CD4-positive, alpha-beta T cell (primary cell): ENCODE measurements at regions of chr1 and their contacts with region 1.

Region 1: DNA sequence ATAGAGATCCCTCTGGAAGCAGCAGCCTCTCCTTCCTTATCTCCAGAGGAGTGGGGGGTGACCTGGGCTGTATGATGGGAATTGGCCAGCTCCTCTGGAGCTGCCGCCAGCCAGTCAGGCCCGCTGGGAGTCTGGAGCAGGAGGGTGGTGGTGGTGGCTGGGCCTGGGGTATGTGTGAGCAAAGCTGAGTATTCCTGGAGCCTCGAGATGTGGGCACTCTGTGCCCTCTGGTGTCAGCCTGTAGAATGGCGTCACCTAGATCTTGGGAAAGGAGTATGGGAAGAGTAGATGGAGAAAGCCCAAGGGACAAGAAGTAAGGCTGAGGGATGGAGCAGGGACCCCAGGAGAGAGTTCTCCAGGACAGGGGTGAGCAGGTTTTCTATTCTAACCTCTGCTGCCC is 16.0 kb downstream of the VANGL2 start:
- DNase-seq: no peak
- ATAC-seq: no peak
- H3K4me3 ChIP-seq: no peak overlapping the region
- H3K4me3 Mint-ChIP-seq: no peak overlapping the region
- H3K27ac ChIP-seq: no peak overlapping the region
- H3K27ac Mint-ChIP-seq: no peak overlapping the region
- H3K4me1 ChIP-seq: no peaks in the 10 kb centered on the region
- H3K4me1 Mint-ChIP-seq: no peaks in the 10 kb centered on the region
- H3K27me3 ChIP-seq: peaks cover 0 to 3% of the 10 kb centered on the region in 2 experiments
- H3K27me3 Mint-ChIP-seq: no peaks in the 10 kb centered on the region
- CTCF ChIP-seq: no peak

Region 2: DNA sequence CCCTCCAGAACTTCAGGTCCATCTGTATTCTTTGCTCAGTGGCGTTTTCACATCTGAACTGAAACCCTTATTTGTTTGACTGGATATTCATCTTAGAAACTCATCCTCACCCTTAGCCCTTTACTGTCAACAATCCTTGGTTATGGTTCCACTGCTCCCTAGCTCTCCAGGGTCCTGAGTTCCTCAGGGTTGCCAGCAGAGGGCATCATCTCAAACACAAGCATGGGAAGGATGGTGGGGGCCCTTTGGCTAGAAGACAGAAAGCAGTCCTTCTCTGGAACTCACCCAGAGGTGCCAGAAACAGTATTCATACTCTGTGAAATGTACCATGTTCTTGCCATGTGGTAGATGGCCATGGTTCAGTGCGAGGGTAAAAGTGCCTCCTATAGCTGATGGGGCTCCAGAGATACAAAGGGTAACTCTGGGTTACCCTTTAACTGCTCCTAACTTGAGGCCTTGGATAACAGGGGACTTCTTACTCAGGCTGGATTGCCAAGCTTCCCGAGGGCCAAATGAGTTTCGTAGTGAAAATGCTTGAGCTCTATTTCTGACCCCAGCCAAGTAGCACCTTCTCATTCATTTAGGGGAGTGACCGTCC is 61.9 kb before region 1 on chr1:
- CTCF ChIA-PET with region 1: no interaction called
- POLR2A ChIA-PET with region 1: no interaction called
- intact Hi-C with region 1: no loop called
- DNase-seq: peak in 3 of 14 experiments; percentile 21 to 48 (median 42)
- ATAC-seq: peak; percentile 58
- H3K4me3 ChIP-seq: no peak overlapping the region
- H3K4me3 Mint-ChIP-seq: no peak overlapping the region
- H3K27ac ChIP-seq: no peak overlapping the region
- H3K27ac Mint-ChIP-seq: no peak overlapping the region
- H3K4me1 ChIP-seq: no peaks in the 10 kb centered on the region
- H3K4me1 Mint-ChIP-seq: peaks cover 3% of the 10 kb centered on the region
- H3K27me3 ChIP-seq: no peaks in the 10 kb centered on the region
- H3K27me3 Mint-ChIP-seq: no peaks in the 10 kb centered on the region
- CTCF ChIP-seq: peak; percentile 27

Region 3: GRCh38 chr1:160437432-160438316 is 21.3 kb after region 1 on chr1:
- CTCF ChIA-PET with region 1: no interaction called
- POLR2A ChIA-PET with region 1: no interaction called
- intact Hi-C with region 1: no loop called
- DNase-seq: peak in 4 of 14 experiments; percentile 29 to 77 (median 74)
- ATAC-seq: peak; percentile 84
- H3K4me3 ChIP-seq: peak overlapping the region; percentile 49
- H3K4me3 Mint-ChIP-seq: peak overlapping the region; percentile 89
- H3K27ac ChIP-seq: peak overlapping the region; percentile 69 to 81
- H3K27ac Mint-ChIP-seq: peak overlapping the region; percentile 94
- H3K4me1 ChIP-seq: peaks cover 19% of the 10 kb centered on the region
- H3K4me1 Mint-ChIP-seq: peaks cover 53% of the 10 kb centered on the region
- H3K27me3 ChIP-seq: no peaks in the 10 kb centered on the region
- H3K27me3 Mint-ChIP-seq: no peaks in the 10 kb centered on the region
- CTCF ChIP-seq: no peak

Region 4: DNA sequence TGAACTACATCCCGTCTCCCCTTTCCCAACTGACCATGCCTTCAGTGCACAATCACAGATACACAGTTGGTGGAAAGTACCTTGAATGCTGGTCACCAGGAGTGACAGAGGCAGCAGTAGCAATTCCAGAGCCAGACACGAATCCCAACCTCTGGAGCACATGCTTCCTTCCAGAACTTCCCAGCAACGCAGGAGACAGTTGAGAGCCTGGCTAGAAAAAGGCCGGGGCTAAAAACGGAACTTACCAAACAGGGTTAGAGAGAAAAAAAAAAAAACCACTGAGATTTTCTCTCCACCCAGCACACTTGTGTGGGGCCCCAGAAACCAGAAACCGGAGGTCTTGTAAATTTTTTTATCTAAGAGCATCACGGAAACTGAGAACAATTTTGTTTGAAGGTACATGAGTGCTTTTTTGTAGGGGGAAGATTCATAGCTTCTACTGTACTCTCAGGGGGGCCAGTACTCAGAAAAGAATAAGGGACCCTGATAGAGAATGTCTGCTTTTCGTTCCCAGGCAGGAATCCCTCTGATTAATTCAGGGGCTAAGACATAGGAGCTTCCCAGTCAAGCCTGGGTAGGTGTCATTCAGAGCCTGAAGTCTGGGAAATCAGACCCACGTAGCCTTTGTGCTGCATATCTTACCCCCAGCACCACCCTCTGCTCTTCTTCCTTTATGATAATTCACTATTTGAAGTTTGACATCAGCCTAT is 295.4 kb after region 1 on chr1 and contains the start of gene CD48:
- CTCF ChIA-PET with region 1: no interaction called
- POLR2A ChIA-PET with region 1: no interaction called
- intact Hi-C with region 1: no loop called
- DNase-seq: peak in 11 of 14 experiments; percentile 26 to 88 (median 50)
- ATAC-seq: peak; percentile 52
- H3K4me3 ChIP-seq: peak within 1 kb of the TSS; percentile 73
- H3K4me3 Mint-ChIP-seq: no peak within 1 kb of the TSS
- H3K27ac ChIP-seq: peak within 1 kb of the TSS; percentile 86 to 93
- H3K27ac Mint-ChIP-seq: no peak within 1 kb of the TSS
- H3K4me1 ChIP-seq: peaks cover 52% of the 10 kb centered on the region
- H3K4me1 Mint-ChIP-seq: peaks cover 50% of the 10 kb centered on the region
- H3K27me3 ChIP-seq: no peaks in the 10 kb centered on the region
- H3K27me3 Mint-ChIP-seq: no peaks in the 10 kb centered on the region
- CTCF ChIP-seq: no peak
- total RNA-seq, gene CD48: 387 to 395 TPM

Region 5: DNA sequence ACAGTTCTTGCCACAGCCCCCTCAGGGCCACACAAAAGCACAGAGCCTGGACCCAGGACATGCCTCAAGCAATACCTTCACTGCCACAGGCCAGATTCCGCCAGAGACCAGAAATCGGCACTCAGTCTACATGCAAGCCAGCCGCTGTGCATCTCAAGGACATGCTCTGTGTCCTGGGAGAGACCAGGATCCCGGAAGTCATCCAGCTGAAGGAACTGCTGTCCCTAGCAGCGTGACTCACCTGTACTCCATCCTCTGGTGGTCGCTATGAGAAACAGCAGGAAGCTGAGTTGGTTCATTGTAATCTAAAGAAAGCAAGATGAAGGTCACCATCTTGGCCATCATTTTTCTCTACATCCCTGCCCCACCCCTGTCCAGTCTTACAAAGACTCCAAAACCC is 468.2 kb after region 1 on chr1:
- CTCF ChIA-PET with region 1: no interaction called
- POLR2A ChIA-PET with region 1: no interaction called
- intact Hi-C with region 1: loop called in 1 of 2 experiments (anchors 10 kb)
- DNase-seq: peak in 1 of 14 experiments; percentile 72
- ATAC-seq: peak; percentile 78
- H3K4me3 ChIP-seq: no peak overlapping the region
- H3K4me3 Mint-ChIP-seq: no peak overlapping the region
- H3K27ac ChIP-seq: no peak overlapping the region
- H3K27ac Mint-ChIP-seq: no peak overlapping the region
- H3K4me1 ChIP-seq: peaks cover 9% of the 10 kb centered on the region
- H3K4me1 Mint-ChIP-seq: peaks cover 5% of the 10 kb centered on the region
- H3K27me3 ChIP-seq: peaks cover 0 to 4% of the 10 kb centered on the region in 2 experiments
- H3K27me3 Mint-ChIP-seq: peaks cover 4% of the 10 kb centered on the region
- CTCF ChIP-seq: peak; percentile 71